ENCODE measurements at regions of chr12 and their contacts with region 1.

Region 1: DNA sequence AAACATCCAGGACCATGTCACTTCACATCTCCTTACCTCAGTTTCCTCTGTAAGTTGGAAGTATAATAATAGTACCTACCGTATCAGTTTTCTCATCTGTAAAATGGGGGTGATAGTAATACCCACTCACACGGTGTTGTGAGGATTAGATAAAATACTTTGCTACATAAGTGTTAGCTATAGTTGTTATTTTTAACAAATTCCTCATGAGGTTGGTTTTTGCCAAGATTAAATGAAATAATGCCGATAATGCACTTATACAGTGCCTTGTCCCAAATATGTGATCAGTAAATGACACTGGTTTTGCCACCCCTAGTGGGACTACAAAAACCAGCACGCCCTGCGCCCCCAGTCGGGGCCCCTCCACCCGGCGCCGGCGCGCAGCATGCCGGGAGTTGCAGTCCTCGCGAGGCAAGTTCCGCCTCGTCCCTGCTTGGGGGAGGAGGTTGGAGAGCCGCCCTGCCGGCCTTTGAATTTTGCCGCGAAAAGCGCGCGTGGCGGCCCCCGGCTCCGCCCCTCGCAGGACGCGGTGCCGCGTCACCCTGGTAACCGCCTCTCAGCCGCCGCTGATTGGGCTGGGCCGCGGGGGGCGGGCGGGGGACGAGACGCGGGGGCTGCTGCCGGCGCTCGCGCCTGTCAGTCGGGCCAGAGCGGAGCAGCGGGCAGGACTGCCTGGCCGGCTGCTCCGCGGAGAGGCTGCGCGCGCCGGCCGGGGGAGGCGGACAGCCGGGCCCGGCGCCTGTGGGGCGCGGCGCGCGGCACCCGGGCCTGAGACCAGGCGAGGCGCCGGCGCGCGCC is at the start of gene FAM222A:
- DNase-seq: peak; percentile 95 to 99 (median 98)
- ATAC-seq: peak; percentile 88
- H3K4me3 ChIP-seq: peak within 1 kb of the TSS; percentile 54 to 55
- H3K4me3 Mint-ChIP-seq: peak within 1 kb of the TSS; percentile 81
- H3K27ac ChIP-seq: no peak within 1 kb of the TSS
- H3K27ac Mint-ChIP-seq: no peak within 1 kb of the TSS
- H3K4me1 ChIP-seq: peaks cover 11% of the 10 kb centered on the region
- H3K4me1 Mint-ChIP-seq: no peaks in the 10 kb centered on the region
- H3K27me3 ChIP-seq: peaks cover 0 to 3% of the 10 kb centered on the region in 2 experiments
- H3K27me3 Mint-ChIP-seq: peaks cover 40% of the 10 kb centered on the region
- CTCF ChIP-seq: no peak
- total RNA-seq, gene FAM222A: 4.4 to 5.3 TPM

Region 2: DNA sequence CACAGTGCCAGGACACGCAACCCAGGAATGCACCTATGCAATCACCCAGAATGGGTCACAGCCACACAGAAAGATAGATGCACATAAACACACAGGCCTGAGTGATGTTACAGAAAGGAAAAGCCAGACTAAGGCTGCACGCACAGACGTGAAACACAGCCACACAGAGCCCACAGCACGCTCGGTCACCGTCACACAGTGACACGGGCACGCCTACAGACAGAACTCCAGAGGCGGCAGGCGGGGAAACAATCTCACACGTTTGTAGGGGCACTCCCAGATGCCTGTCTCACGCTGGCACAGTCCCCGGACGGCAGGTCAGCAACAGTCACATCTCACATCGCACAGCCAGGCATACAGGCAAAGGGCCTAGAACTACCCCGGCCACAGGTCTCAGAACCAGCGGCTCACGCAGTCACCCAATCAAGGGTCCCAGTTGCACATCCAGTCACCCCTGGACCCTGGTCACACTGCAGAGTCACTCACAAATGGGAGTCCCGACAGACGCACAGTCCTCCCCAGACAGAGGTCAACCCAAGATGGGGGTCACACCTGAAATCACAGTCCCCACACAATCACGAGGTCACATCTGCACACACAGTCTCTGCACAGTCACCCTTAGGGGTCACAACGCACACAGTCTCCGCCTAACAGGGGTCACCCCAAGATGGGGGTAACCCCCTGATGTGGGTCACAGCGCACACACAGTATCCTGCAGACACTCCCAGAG is 856.8 kb before region 1 on chr12:
- CTCF ChIA-PET with region 1: no interaction called
- POLR2A ChIA-PET with region 1: no interaction called
- intact Hi-C with region 1: loop called in 1 of 2 experiments (anchors 5 kb)
- DNase-seq: peak; percentile 27 to 92 (median 64)
- ATAC-seq: peak; percentile 70
- H3K4me3 ChIP-seq: peak overlapping the region; percentile 58 to 71
- H3K4me3 Mint-ChIP-seq: peak overlapping the region; percentile 98
- H3K27ac ChIP-seq: peak overlapping the region; percentile 54 to 77
- H3K27ac Mint-ChIP-seq: peak overlapping the region; percentile 97
- H3K4me1 ChIP-seq: peaks cover 27% of the 10 kb centered on the region
- H3K4me1 Mint-ChIP-seq: peaks cover 46% of the 10 kb centered on the region
- H3K27me3 ChIP-seq: peaks cover 0 to 2% of the 10 kb centered on the region in 2 experiments
- H3K27me3 Mint-ChIP-seq: no peaks in the 10 kb centered on the region
- CTCF ChIP-seq: no peak

Region 3: GRCh38 chr12:109518820-109519665 is 194.3 kb before region 1 on chr12:
- CTCF ChIA-PET with region 1: no interaction called
- POLR2A ChIA-PET with region 1: no interaction called
- intact Hi-C with region 1: loop called in 1 of 2 experiments (anchors 1 kb)
- DNase-seq: peak; percentile 19 to 66 (median 55)
- ATAC-seq: no peak
- H3K4me3 ChIP-seq: no peak overlapping the region
- H3K4me3 Mint-ChIP-seq: no peak overlapping the region
- H3K27ac ChIP-seq: no peak overlapping the region
- H3K27ac Mint-ChIP-seq: no peak overlapping the region
- H3K4me1 ChIP-seq: no peaks in the 10 kb centered on the region
- H3K4me1 Mint-ChIP-seq: no peaks in the 10 kb centered on the region
- H3K27me3 ChIP-seq: no peaks in the 10 kb centered on the region
- H3K27me3 Mint-ChIP-seq: no peaks in the 10 kb centered on the region
- CTCF ChIP-seq: peak; percentile 70

Region 4: DNA sequence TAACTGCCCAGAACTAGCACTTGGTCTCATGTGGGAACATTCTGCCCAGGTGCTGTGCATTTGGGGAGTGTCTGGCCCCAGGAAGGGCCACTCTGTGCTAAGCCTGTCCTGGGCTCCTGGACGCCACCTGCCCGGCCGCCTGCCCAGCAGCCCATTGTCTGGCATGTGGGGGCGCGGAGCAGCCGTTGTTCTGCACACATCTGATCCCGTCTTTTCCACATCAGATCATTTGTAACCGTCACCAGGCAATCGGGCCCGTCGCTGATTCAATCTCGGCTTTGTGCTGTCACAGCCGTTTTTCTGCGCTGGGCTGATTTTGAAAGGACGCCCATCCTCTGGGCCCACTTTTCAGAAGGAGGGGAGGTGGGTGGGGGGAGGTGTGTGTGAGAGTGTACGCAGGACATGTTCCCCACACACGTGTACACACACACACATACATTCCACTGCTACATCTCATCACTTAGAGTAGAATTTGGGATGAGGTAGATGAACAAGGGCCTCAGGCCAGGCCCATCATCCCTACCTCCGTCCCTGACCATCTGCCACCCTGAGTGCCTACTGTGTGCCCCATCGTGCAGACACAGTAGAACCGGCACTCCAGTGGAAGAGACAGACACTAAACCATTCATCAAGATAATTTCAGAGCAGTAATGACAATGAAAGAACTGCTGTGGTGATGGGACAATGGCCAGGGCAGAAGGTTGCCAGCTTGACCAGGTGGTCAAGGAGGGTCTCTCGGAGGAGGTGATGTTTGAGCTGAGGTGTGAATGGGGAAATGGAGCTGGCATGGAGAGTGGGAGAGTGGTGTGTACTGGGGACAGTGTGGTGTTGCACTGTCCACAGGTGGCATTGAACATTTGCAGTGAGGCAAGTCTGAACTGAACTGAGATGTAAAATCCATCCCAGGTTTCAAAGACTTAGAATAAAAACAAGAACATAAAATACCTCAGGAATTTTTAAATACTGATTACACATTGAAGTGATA is 19.2 kb after region 1 on chr12:
- CTCF ChIA-PET with region 1: no interaction called
- POLR2A ChIA-PET with region 1: no interaction called
- intact Hi-C with region 1: no loop called
- DNase-seq: peak in 1 of 9 experiments; percentile 6
- ATAC-seq: no peak
- H3K4me3 ChIP-seq: no peak overlapping the region
- H3K4me3 Mint-ChIP-seq: no peak overlapping the region
- H3K27ac ChIP-seq: no peak overlapping the region
- H3K27ac Mint-ChIP-seq: no peak overlapping the region
- H3K4me1 ChIP-seq: no peaks in the 10 kb centered on the region
- H3K4me1 Mint-ChIP-seq: no peaks in the 10 kb centered on the region
- H3K27me3 ChIP-seq: no peaks in the 10 kb centered on the region
- H3K27me3 Mint-ChIP-seq: peaks cover 17% of the 10 kb centered on the region
- CTCF ChIP-seq: no peak

Region 5: GRCh38 chr12:109880016-109880931 is 166.9 kb after region 1 on chr12 and contains the start of gene GLTP:
- CTCF ChIA-PET with region 1: no interaction called
- POLR2A ChIA-PET with region 1: no interaction called
- intact Hi-C with region 1: loop called (anchors 1 kb)
- DNase-seq: peak; percentile 82 to 96 (median 89)
- ATAC-seq: peak; percentile 98
- H3K4me3 ChIP-seq: peak within 1 kb of the TSS; percentile 96 to 97
- H3K4me3 Mint-ChIP-seq: peak within 1 kb of the TSS; percentile 96
- H3K27ac ChIP-seq: peak within 1 kb of the TSS; percentile 86 to 92
- H3K27ac Mint-ChIP-seq: peak within 1 kb of the TSS; percentile 93
- H3K4me1 ChIP-seq: peaks cover 26% of the 10 kb centered on the region
- H3K4me1 Mint-ChIP-seq: peaks cover 46% of the 10 kb centered on the region
- H3K27me3 ChIP-seq: no peaks in the 10 kb centered on the region
- H3K27me3 Mint-ChIP-seq: no peaks in the 10 kb centered on the region
- CTCF ChIP-seq: peak; percentile 48
- total RNA-seq, gene GLTP: 36.9 to 40.7 TPM

Region 6: GRCh38 chr12:110124184-110124995 is 411.0 kb after region 1 on chr12 and contains the start of gene IFT81:
- CTCF ChIA-PET with region 1: no interaction called
- POLR2A ChIA-PET with region 1: no interaction called
- intact Hi-C with region 1: loop called in 1 of 2 experiments (anchors 5 kb)
- DNase-seq: peak; percentile 94 to 99 (median 96)
- ATAC-seq: peak; percentile 95
- H3K4me3 ChIP-seq: peak within 1 kb of the TSS; percentile 69 to 96
- H3K4me3 Mint-ChIP-seq: peak within 1 kb of the TSS; percentile 91
- H3K27ac ChIP-seq: peak within 1 kb of the TSS; percentile 60 to 73
- H3K27ac Mint-ChIP-seq: peak within 1 kb of the TSS; percentile 83
- H3K4me1 ChIP-seq: peaks cover 10% of the 10 kb centered on the region
- H3K4me1 Mint-ChIP-seq: peaks cover 8% of the 10 kb centered on the region
- H3K27me3 ChIP-seq: no peaks in the 10 kb centered on the region
- H3K27me3 Mint-ChIP-seq: peaks cover 3% of the 10 kb centered on the region
- CTCF ChIP-seq: no peak
- total RNA-seq, gene IFT81: 0.25 to 0.43 TPM

Region 7: DNA sequence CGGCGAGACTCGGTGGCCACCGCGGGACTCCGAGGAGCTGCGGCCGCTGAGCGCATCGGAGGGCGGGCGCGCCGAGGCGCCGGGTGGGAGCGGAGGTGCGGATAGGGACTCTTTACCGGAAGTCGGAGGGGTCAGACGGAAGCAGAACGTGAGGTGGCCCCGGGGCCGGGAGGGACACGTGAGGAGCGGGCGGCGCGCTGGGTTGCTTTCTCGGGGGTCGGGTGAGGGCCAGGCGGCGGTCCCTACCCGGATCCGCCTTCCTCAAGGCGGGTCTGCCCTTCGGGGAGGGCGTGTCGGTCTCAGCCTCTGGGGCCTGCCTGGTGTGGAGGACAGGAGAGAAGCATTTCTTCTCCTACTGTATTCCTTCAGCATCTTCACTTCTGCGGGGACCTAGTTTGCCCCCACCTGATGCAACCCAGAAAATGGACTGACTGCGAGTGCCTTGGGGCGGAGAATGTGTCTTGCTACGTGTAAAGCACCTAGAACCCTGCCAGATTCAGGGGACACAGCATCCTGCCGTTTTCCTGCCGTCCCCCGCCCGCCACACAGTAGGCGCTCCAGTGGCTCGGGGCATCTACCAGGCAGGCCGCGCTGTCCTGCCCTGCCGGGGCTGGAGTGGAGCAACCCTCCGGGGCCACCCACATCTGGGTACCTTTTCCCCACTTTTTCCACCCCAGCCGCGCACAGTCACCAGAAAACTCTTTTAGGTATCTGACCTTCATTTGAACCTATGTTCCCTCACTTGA is 1886.2 kb after region 1 on chr12:
- CTCF ChIA-PET with region 1: no interaction called
- POLR2A ChIA-PET with region 1: no interaction called
- intact Hi-C with region 1: loop called in 1 of 2 experiments (anchors 5 kb)
- DNase-seq: peak; percentile 70 to 95 (median 87)
- ATAC-seq: peak; percentile 75
- H3K4me3 ChIP-seq: peak overlapping the region; percentile 68 to 97
- H3K4me3 Mint-ChIP-seq: peak overlapping the region; percentile 90
- H3K27ac ChIP-seq: peak overlapping the region; percentile 72 to 77
- H3K27ac Mint-ChIP-seq: peak overlapping the region; percentile 91
- H3K4me1 ChIP-seq: peaks cover 20% of the 10 kb centered on the region
- H3K4me1 Mint-ChIP-seq: peaks cover 34% of the 10 kb centered on the region
- H3K27me3 ChIP-seq: no peaks in the 10 kb centered on the region
- H3K27me3 Mint-ChIP-seq: no peaks in the 10 kb centered on the region
- CTCF ChIP-seq: no peak